ENCODE measurements at regions of chr2 and their contacts with region 1.

Region 1: GRCh38 chr2:197461057-197461456 is 7.7 kb downstream of the COQ10B start:
- DNase-seq: no peak
- H3K4me3 ChIP-seq: no peak overlapping the region
- H3K4me3 Mint-ChIP-seq: no peak overlapping the region
- H3K27ac ChIP-seq: no peak overlapping the region
- H3K27ac Mint-ChIP-seq: peak overlapping the region in 1 of 7 donors; percentile 54
- H3K4me1 ChIP-seq: peaks cover 3 to 6% of the 10 kb centered on the region in 2 donors
- H3K4me1 Mint-ChIP-seq: peaks cover 16% of the 10 kb centered on the region
- H3K27me3 ChIP-seq: no peaks in the 10 kb centered on the region
- H3K27me3 Mint-ChIP-seq: peaks cover 0 to 2% (median 0%) of the 10 kb centered on the region in 3 donors
- CTCF ChIP-seq: no peak

Region 2: GRCh38 chr2:197416268-197416667 is 44.8 kb before region 1 on chr2:
- intact Hi-C with region 1: loop called in 1 of 2 experiments (anchors 10 kb)
- DNase-seq: no peak
- H3K4me3 ChIP-seq: no peak overlapping the region
- H3K4me3 Mint-ChIP-seq: no peak overlapping the region
- H3K27ac ChIP-seq: no peak overlapping the region
- H3K27ac Mint-ChIP-seq: peak overlapping the region in 1 of 7 donors; percentile 46
- H3K4me1 ChIP-seq: no peaks in the 10 kb centered on the region
- H3K4me1 Mint-ChIP-seq: no peaks in the 10 kb centered on the region
- H3K27me3 ChIP-seq: no peaks in the 10 kb centered on the region
- H3K27me3 Mint-ChIP-seq: no peaks in the 10 kb centered on the region
- CTCF ChIP-seq: no peak

Region 3: DNA sequence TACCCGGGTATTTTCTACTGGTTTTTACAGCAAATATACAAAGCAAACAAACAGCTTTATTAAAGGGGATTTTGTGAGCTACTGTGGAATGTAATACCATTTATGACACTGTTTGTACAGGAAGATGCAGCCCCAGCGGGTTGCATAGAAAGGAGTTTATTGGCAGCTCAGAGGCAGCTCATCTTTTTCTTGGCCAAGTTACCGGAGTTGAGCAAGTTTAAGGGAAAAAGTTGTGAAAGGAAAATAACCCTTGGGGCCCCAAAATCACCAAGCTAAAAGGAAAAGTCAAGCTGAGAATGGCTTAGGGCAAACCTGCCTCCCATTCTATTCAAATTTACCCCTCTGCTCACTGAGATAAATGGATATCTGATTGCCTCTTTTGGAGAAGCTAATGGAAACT is 115.6 kb after region 1 on chr2:
- intact Hi-C with region 1: no loop called
- DNase-seq: no peak
- H3K4me3 ChIP-seq: no peak overlapping the region
- H3K4me3 Mint-ChIP-seq: no peak overlapping the region
- H3K27ac ChIP-seq: no peak overlapping the region
- H3K27ac Mint-ChIP-seq: no peak overlapping the region
- H3K4me1 ChIP-seq: no peaks in the 10 kb centered on the region
- H3K4me1 Mint-ChIP-seq: no peaks in the 10 kb centered on the region
- H3K27me3 ChIP-seq: no peaks in the 10 kb centered on the region
- H3K27me3 Mint-ChIP-seq: peaks cover 0 to 2% (median 0%) of the 10 kb centered on the region in 3 donors
- CTCF ChIP-seq: no peak

Region 4: GRCh38 chr2:197946562-197946961 is 485.5 kb after region 1 on chr2:
- intact Hi-C with region 1: no loop called
- DNase-seq: no peak
- H3K4me3 ChIP-seq: no peak overlapping the region
- H3K4me3 Mint-ChIP-seq: no peak overlapping the region
- H3K27ac ChIP-seq: no peak overlapping the region
- H3K27ac Mint-ChIP-seq: no peak overlapping the region
- H3K4me1 ChIP-seq: no peaks in the 10 kb centered on the region
- H3K4me1 Mint-ChIP-seq: no peaks in the 10 kb centered on the region
- H3K27me3 ChIP-seq: peaks cover 0 to 2% of the 10 kb centered on the region in 2 donors
- H3K27me3 Mint-ChIP-seq: peaks cover 7 to 11% (median 7%) of the 10 kb centered on the region in 3 donors
- CTCF ChIP-seq: no peak